ENCODE measurements at regions of chr7 and their contacts with region 1.

Region 1: GRCh38 chr7:150448789-150449147 is 1.7 kb upstream of the GIMAP8 start:
- DNase-seq: peak; percentile 77 to 94 (median 85)
- ATAC-seq: peak; percentile 38 to 56 (median 41)
- H3K4me3 ChIP-seq: peak overlapping the region; percentile 29 to 35
- H3K4me3 Mint-ChIP-seq: peak overlapping the region; percentile 98 to 100 (median 99)
- H3K27ac ChIP-seq: peak overlapping the region; percentile 94
- H3K27ac Mint-ChIP-seq: peak overlapping the region; percentile 97 to 99
- H3K4me1 ChIP-seq: peaks cover 25 to 67% of the 10 kb centered on the region in 2 experiments
- H3K4me1 Mint-ChIP-seq: peaks cover 54 to 64% (median 62%) of the 10 kb centered on the region in 3 donors
- H3K27me3 ChIP-seq: no peaks in the 10 kb centered on the region
- H3K27me3 Mint-ChIP-seq: no peaks in the 10 kb centered on the region

Region 2: GRCh38 chr7:150502519-150502918 is 53.8 kb after region 1 on chr7:
- CTCF ChIA-PET with region 1: interaction called in 1 of 2 experiments, 10 read pairs
- POLR2A ChIA-PET with region 1: interaction called in 1 of 2 experiments, 3 read pairs
- DNase-seq: peak in 23 of 35 experiments; percentile 30 to 70 (median 39)
- ATAC-seq: peak; percentile 89 to 92 (median 90)
- H3K4me3 ChIP-seq: no peak overlapping the region
- H3K4me3 Mint-ChIP-seq: peak overlapping the region; percentile 32 to 63 (median 60)
- H3K27ac ChIP-seq: peak overlapping the region; percentile 81
- H3K27ac Mint-ChIP-seq: peak overlapping the region; percentile 95
- H3K4me1 ChIP-seq: peaks cover 39 to 41% of the 10 kb centered on the region in 2 experiments
- H3K4me1 Mint-ChIP-seq: peaks cover 84 to 92% (median 87%) of the 10 kb centered on the region in 3 donors
- H3K27me3 ChIP-seq: no peaks in the 10 kb centered on the region
- H3K27me3 Mint-ChIP-seq: no peaks in the 10 kb centered on the region

Region 3: GRCh38 chr7:150514748-150515222 is 66.0 kb after region 1 on chr7 and contains the start of gene GIMAP7:
- CTCF ChIA-PET with region 1: interaction called, 3 to 7 read pairs
- POLR2A ChIA-PET with region 1: interaction called, 6 to 12 read pairs
- DNase-seq: peak; percentile 41 to 80 (median 68)
- ATAC-seq: peak; percentile 76 to 87 (median 78)
- H3K4me3 ChIP-seq: peak within 1 kb of the TSS; percentile 93 to 94
- H3K4me3 Mint-ChIP-seq: peak within 1 kb of the TSS; percentile 95 to 100 (median 99)
- H3K27ac ChIP-seq: peak within 1 kb of the TSS; percentile 88
- H3K27ac Mint-ChIP-seq: peak within 1 kb of the TSS; percentile 99 to 100
- H3K4me1 ChIP-seq: peaks cover 34 to 42% of the 10 kb centered on the region in 2 experiments
- H3K4me1 Mint-ChIP-seq: peaks cover 49 to 51% (median 49%) of the 10 kb centered on the region in 3 donors
- H3K27me3 ChIP-seq: no peaks in the 10 kb centered on the region
- H3K27me3 Mint-ChIP-seq: no peaks in the 10 kb centered on the region
- total RNA-seq, gene GIMAP7: 76.8 to 430 (median 392) TPM

Region 4: DNA sequence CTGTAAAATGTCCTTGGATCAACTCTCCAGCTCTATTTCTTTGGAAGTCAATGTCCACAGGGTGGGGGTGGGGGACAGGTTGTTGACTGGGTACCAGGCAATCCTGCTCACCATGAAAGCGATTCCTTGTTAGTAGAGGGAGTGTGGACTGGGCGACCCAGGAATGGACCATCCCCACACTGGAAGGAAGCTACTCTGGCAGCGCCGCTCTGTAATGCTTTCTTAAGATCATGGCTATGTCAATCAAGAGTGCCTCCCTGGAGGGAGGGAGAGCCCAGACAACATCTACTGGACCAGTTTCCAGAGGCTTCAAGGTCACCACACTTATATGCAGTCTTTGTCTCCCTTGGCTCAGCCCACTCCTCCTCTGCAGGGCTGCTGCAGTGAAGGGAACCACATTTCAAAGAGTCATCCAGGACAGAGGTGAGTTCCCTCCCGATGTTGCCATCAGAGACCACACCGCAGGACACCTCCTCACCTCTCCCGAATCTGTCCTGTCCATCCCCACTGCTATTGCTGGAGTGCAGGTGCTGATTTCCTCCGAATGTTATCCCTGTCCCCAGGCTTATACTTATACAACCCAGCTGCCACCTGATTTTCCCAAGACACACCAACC is 295.4 kb after region 1 on chr7:
- CTCF ChIA-PET with region 1: interaction called, 4 to 10 read pairs
- POLR2A ChIA-PET with region 1: interaction called in 1 of 2 experiments, 11 read pairs
- DNase-seq: peak in 1 of 35 experiments; percentile 29
- ATAC-seq: peak in 2 of 4 experiments; percentile 5 to 7
- H3K4me3 ChIP-seq: peak overlapping the region; percentile 59 to 66
- H3K4me3 Mint-ChIP-seq: peak overlapping the region; percentile 93 to 99 (median 93)
- H3K27ac ChIP-seq: peak overlapping the region; percentile 62
- H3K27ac Mint-ChIP-seq: peak overlapping the region; percentile 94 to 99
- H3K4me1 ChIP-seq: peaks cover 73 to 79% of the 10 kb centered on the region in 2 experiments
- H3K4me1 Mint-ChIP-seq: peaks cover 88 to 98% (median 90%) of the 10 kb centered on the region in 3 donors
- H3K27me3 ChIP-seq: no peaks in the 10 kb centered on the region
- H3K27me3 Mint-ChIP-seq: no peaks in the 10 kb centered on the region

Region 5: GRCh38 chr7:150756858-150757257 is 308.1 kb after region 1 on chr7:
- CTCF ChIA-PET with region 1: interaction called, 7 to 68 read pairs
- POLR2A ChIA-PET with region 1: interaction called in 1 of 2 experiments, 7 read pairs
- DNase-seq: peak in 4 of 35 experiments; percentile 41 to 82 (median 44)
- ATAC-seq: peak in 3 of 4 experiments; percentile 28 to 53 (median 28)
- H3K4me3 ChIP-seq: no peak overlapping the region
- H3K4me3 Mint-ChIP-seq: peak overlapping the region; percentile 63 to 79 (median 68)
- H3K27ac ChIP-seq: peak overlapping the region; percentile 77
- H3K27ac Mint-ChIP-seq: peak overlapping the region; percentile 98 to 99
- H3K4me1 ChIP-seq: peaks cover 32 to 43% of the 10 kb centered on the region in 2 experiments
- H3K4me1 Mint-ChIP-seq: peaks cover 48 to 53% (median 49%) of the 10 kb centered on the region in 3 donors
- H3K27me3 ChIP-seq: no peaks in the 10 kb centered on the region
- H3K27me3 Mint-ChIP-seq: no peaks in the 10 kb centered on the region

Region 6: GRCh38 chr7:151131592-151132293 is 683.0 kb after region 1 on chr7:
- CTCF ChIA-PET with region 1: no interaction called
- POLR2A ChIA-PET with region 1: no interaction called
- DNase-seq: no peak
- ATAC-seq: no peak
- H3K4me3 ChIP-seq: no peak overlapping the region
- H3K4me3 Mint-ChIP-seq: no peak overlapping the region
- H3K27ac ChIP-seq: no peak overlapping the region
- H3K27ac Mint-ChIP-seq: no peak overlapping the region
- H3K4me1 ChIP-seq: no peaks in the 10 kb centered on the region
- H3K4me1 Mint-ChIP-seq: no peaks in the 10 kb centered on the region
- H3K27me3 ChIP-seq: peaks cover 0 to 2% of the 10 kb centered on the region in 2 experiments
- H3K27me3 Mint-ChIP-seq: no peaks in the 10 kb centered on the region

Measured in T-cell (primary cell).